Sigmoid colon (tissue), 7 donors: ENCODE measurements at regions of chr14 and their contacts with region 1.

Region 1: GRCh38 chr14:105203057-105203531 is 22.0 kb upstream of the NUDT14 start:
- DNase-seq: peak; percentile 87
- H3K4me3 ChIP-seq: no peak overlapping the region
- H3K27ac ChIP-seq: no peak overlapping the region
- H3K4me1 ChIP-seq: peaks cover 0 to 31% (median 27%) of the 10 kb centered on the region in 4 donors
- H3K27me3 ChIP-seq: peaks cover 18 to 47% (median 43%) of the 10 kb centered on the region in 3 donors
- CTCF ChIP-seq: peak; percentile 38 to 97 (median 82)
- EP300 ChIP-seq: no peak
- POLR2A ChIP-seq: no peak

Region 2: GRCh38 chr14:104786091-104786586 is 417.0 kb before region 1 on chr14:
- intact Hi-C with region 1: no loop called
- DNase-seq: no peak
- H3K4me3 ChIP-seq: no peak overlapping the region
- H3K27ac ChIP-seq: no peak overlapping the region
- H3K4me1 ChIP-seq: peaks cover 0 to 59% (median 49%) of the 10 kb centered on the region in 4 donors
- H3K27me3 ChIP-seq: no peaks in the 10 kb centered on the region
- CTCF ChIP-seq: no peak
- EP300 ChIP-seq: no peak
- POLR2A ChIP-seq: no peak

Region 3: GRCh38 chr14:105045710-105046326 is 157.3 kb before region 1 on chr14:
- intact Hi-C with region 1: no loop called
- DNase-seq: peak; percentile 94
- H3K4me3 ChIP-seq: no peak overlapping the region
- H3K27ac ChIP-seq: no peak overlapping the region
- H3K4me1 ChIP-seq: peaks cover 0 to 4% (median 1%) of the 10 kb centered on the region in 4 donors
- H3K27me3 ChIP-seq: no peaks in the 10 kb centered on the region
- CTCF ChIP-seq: peak; percentile 99 to 100 (median 99)
- EP300 ChIP-seq: no peak
- POLR2A ChIP-seq: no peak

Region 4: GRCh38 chr14:105281371-105282097 is 78.4 kb after region 1 on chr14:
- intact Hi-C with region 1: loop called (anchors 5 kb)
- DNase-seq: no peak
- H3K4me3 ChIP-seq: no peak overlapping the region
- H3K27ac ChIP-seq: no peak overlapping the region
- H3K4me1 ChIP-seq: peaks cover 0 to 11% (median 5%) of the 10 kb centered on the region in 4 donors
- H3K27me3 ChIP-seq: no peaks in the 10 kb centered on the region
- CTCF ChIP-seq: peak in 2 of 4 experiments; percentile 27 to 45
- EP300 ChIP-seq: no peak
- POLR2A ChIP-seq: no peak

Region 5: GRCh38 chr14:105351920-105352851 is 149.1 kb after region 1 on chr14:
- intact Hi-C with region 1: loop called (anchors 1 kb)
- DNase-seq: peak; percentile 90
- H3K4me3 ChIP-seq: no peak overlapping the region
- H3K27ac ChIP-seq: peak overlapping the region in 1 of 4 donors; percentile 3
- H3K4me1 ChIP-seq: peaks cover 0 to 10% (median 4%) of the 10 kb centered on the region in 4 donors
- H3K27me3 ChIP-seq: no peaks in the 10 kb centered on the region
- CTCF ChIP-seq: peak; percentile 68 to 90 (median 84)
- EP300 ChIP-seq: no peak
- POLR2A ChIP-seq: no peak